AG04450 (cell line): ENCODE measurements at regions of chr9 and their contacts with region 1.

Region 1: GRCh38 chr9:126791406-126792151 is 13.3 kb upstream of the ZBTB43 start:
- DNase-seq: peak; percentile 54
- H3K4me3 ChIP-seq: no peak overlapping the region
- H3K27ac ChIP-seq: peak overlapping the region; percentile 57
- H3K27me3 ChIP-seq: peaks cover 5% of the 10 kb centered on the region
- CTCF ChIP-seq: no peak

Region 2: GRCh38 chr9:126804696-126805545 is 13.3 kb after region 1 on chr9 and contains the start of gene ZBTB43:
- CTCF ChIA-PET with region 1: no interaction called
- POLR2A ChIA-PET with region 1: interaction called, 12 read pairs
- DNase-seq: peak; percentile 82
- H3K4me3 ChIP-seq: peak within 1 kb of the TSS; percentile 89
- H3K27ac ChIP-seq: peak within 1 kb of the TSS; percentile 77
- H3K27me3 ChIP-seq: no peaks in the 10 kb centered on the region
- CTCF ChIP-seq: no peak
- polyA plus RNA-seq, gene ZBTB43: 11.7 and 12.3 TPM in 2 replicates

Region 3: GRCh38 chr9:126819482-126819881 is 27.9 kb after region 1 on chr9:
- CTCF ChIA-PET with region 1: no interaction called
- POLR2A ChIA-PET with region 1: no interaction called
- DNase-seq: no peak
- H3K4me3 ChIP-seq: no peak overlapping the region
- H3K27ac ChIP-seq: no peak overlapping the region
- H3K27me3 ChIP-seq: no peaks in the 10 kb centered on the region
- CTCF ChIP-seq: no peak

Region 4: DNA sequence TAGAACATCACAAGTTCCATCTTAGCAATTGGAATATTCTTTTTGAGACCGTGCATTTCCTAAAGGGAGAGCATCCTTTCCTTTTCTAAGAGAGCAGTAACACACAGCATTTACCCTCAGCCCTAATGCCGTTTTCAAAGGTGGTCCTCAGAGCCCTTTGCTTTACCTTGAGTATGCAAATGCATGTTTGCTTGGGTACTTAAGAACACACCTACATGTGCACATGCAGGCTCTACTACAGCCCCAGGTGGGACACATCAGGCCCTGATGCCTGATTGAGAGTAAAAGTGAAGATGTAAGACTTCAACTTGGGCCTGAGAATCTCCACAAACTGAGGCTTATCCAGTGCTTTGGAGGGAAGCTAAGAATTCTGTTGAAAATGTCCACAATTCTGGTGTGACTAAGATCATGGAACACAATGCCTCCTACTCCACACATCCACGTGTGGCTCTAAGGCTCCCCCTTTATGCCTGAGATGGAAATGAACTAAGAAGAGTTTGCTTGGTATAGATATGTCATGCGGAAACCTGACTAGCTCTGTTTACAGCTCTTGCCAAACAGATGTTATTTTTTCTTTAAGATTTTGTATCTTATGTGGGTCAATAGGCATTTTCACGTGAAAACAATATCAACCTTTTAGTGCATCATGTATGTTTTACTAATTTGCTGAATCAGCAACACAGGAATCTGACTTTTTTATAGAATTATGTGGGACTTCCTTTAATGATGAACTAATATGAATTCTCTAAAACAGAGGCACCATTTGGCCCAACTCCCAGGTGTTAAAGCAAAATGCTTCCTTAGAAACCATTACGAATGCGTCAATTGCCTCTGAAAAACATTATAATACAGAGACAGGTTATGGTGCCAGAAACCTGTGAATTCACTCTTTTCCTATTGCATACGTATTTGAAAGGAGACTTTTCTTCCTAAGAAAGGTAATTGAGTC is 556.5 kb after region 1 on chr9:
- CTCF ChIA-PET with region 1: no interaction called
- POLR2A ChIA-PET with region 1: no interaction called
- DNase-seq: no peak
- H3K4me3 ChIP-seq: no peak overlapping the region
- H3K27ac ChIP-seq: no peak overlapping the region
- H3K27me3 ChIP-seq: no peaks in the 10 kb centered on the region
- CTCF ChIP-seq: peak; percentile 57